MCF 10A (cell line): ENCODE measurements at regions of chr5 and their contacts with region 1.

Region 1: GRCh38 chr5:61817472-61818326 is 485.6 kb downstream of the ZSWIM6 start:
- DNase-seq: peak; percentile 53
- H3K4me3 Mint-ChIP-seq: no peak overlapping the region
- H3K27ac Mint-ChIP-seq: no peak overlapping the region
- H3K4me1 Mint-ChIP-seq: peaks cover 17% of the 10 kb centered on the region
- H3K27me3 Mint-ChIP-seq: no peaks in the 10 kb centered on the region
- CTCF ChIP-seq: peak; percentile 51

Region 2: GRCh38 chr5:61055434-61056006 is 762.2 kb before region 1 on chr5:
- CTCF ChIA-PET with region 1: interaction called, 3 read pairs
- POLR2A ChIA-PET with region 1: no interaction called
- intact Hi-C with region 1: loop called (anchors 5 kb)
- DNase-seq: peak; percentile 51
- H3K4me3 Mint-ChIP-seq: no peak overlapping the region
- H3K27ac Mint-ChIP-seq: no peak overlapping the region
- H3K4me1 Mint-ChIP-seq: peaks cover 33% of the 10 kb centered on the region
- H3K27me3 Mint-ChIP-seq: no peaks in the 10 kb centered on the region
- CTCF ChIP-seq: peak; percentile 60

Region 3: GRCh38 chr5:61167382-61167781 is 650.3 kb before region 1 on chr5:
- CTCF ChIA-PET with region 1: interaction called, 3 read pairs
- POLR2A ChIA-PET with region 1: interaction called, 8 read pairs
- intact Hi-C with region 1: loop called (anchors 5 kb)
- DNase-seq: peak; percentile 54
- H3K4me3 Mint-ChIP-seq: no peak overlapping the region
- H3K27ac Mint-ChIP-seq: no peak overlapping the region
- H3K4me1 Mint-ChIP-seq: peaks cover 8% of the 10 kb centered on the region
- H3K27me3 Mint-ChIP-seq: no peaks in the 10 kb centered on the region
- CTCF ChIP-seq: peak; percentile 50

Region 4: GRCh38 chr5:61758711-61759495 is 58.8 kb before region 1 on chr5:
- CTCF ChIA-PET with region 1: no interaction called
- POLR2A ChIA-PET with region 1: no interaction called
- intact Hi-C with region 1: no loop called
- DNase-seq: no peak
- H3K4me3 Mint-ChIP-seq: no peak overlapping the region
- H3K27ac Mint-ChIP-seq: no peak overlapping the region
- H3K4me1 Mint-ChIP-seq: no peaks in the 10 kb centered on the region
- H3K27me3 Mint-ChIP-seq: no peaks in the 10 kb centered on the region
- CTCF ChIP-seq: no peak

Region 5: DNA sequence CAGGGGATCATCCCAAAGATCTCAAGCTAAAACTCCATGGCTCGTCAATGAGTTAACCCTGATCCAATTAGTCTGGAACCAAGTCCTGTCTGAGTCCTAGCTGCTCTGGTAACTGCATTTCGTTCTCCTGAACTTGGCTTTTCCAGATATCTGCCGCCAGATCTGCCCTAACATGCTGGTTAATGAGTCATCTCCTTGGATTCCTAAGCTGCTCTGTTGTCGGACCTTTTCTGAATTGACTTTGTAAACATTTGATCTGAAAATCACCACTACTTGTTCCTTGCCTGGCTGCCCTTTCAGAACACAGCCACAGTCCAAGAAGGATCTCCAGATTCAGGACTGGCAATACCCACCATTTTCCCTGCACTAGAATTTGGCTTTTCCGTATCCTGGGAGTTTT is 12.6 kb before region 1 on chr5:
- CTCF ChIA-PET with region 1: interaction called, 8 read pairs
- POLR2A ChIA-PET with region 1: interaction called, 11 read pairs
- intact Hi-C with region 1: no loop called
- DNase-seq: peak; percentile 80
- H3K4me3 Mint-ChIP-seq: no peak overlapping the region
- H3K27ac Mint-ChIP-seq: peak overlapping the region; percentile 90
- H3K4me1 Mint-ChIP-seq: peaks cover 16% of the 10 kb centered on the region
- H3K27me3 Mint-ChIP-seq: no peaks in the 10 kb centered on the region
- CTCF ChIP-seq: no peak

Region 6: GRCh38 chr5:61842840-61843239 is 25.1 kb after region 1 on chr5:
- CTCF ChIA-PET with region 1: no interaction called
- POLR2A ChIA-PET with region 1: no interaction called
- intact Hi-C with region 1: no loop called
- DNase-seq: no peak
- H3K4me3 Mint-ChIP-seq: no peak overlapping the region
- H3K27ac Mint-ChIP-seq: no peak overlapping the region
- H3K4me1 Mint-ChIP-seq: peaks cover 8% of the 10 kb centered on the region
- H3K27me3 Mint-ChIP-seq: no peaks in the 10 kb centered on the region
- CTCF ChIP-seq: no peak

Region 7: GRCh38 chr5:63097286-63097685 is 1279.6 kb after region 1 on chr5:
- CTCF ChIA-PET with region 1: no interaction called
- POLR2A ChIA-PET with region 1: no interaction called
- intact Hi-C with region 1: no loop called
- DNase-seq: no peak
- H3K4me3 Mint-ChIP-seq: no peak overlapping the region
- H3K27ac Mint-ChIP-seq: no peak overlapping the region
- H3K4me1 Mint-ChIP-seq: no peaks in the 10 kb centered on the region
- H3K27me3 Mint-ChIP-seq: no peaks in the 10 kb centered on the region
- CTCF ChIP-seq: no peak